ENCODE measurements at regions of chr1 and their contacts with region 1.

Region 1: GRCh38 chr1:47703981-47704596 is 266.2 kb downstream of the FOXD2 start:
- DNase-seq: peak; percentile 39
- H3K4me3 ChIP-seq: no peak overlapping the region
- H3K27ac ChIP-seq: no peak overlapping the region
- H3K4me1 ChIP-seq: no peaks in the 10 kb centered on the region
- H3K27me3 ChIP-seq: peaks cover 20 to 27% of the 10 kb centered on the region in 2 experiments
- CTCF ChIP-seq: peak in 1 of 2 donors; percentile 12
- POLR2A ChIP-seq: no peak

Region 2: DNA sequence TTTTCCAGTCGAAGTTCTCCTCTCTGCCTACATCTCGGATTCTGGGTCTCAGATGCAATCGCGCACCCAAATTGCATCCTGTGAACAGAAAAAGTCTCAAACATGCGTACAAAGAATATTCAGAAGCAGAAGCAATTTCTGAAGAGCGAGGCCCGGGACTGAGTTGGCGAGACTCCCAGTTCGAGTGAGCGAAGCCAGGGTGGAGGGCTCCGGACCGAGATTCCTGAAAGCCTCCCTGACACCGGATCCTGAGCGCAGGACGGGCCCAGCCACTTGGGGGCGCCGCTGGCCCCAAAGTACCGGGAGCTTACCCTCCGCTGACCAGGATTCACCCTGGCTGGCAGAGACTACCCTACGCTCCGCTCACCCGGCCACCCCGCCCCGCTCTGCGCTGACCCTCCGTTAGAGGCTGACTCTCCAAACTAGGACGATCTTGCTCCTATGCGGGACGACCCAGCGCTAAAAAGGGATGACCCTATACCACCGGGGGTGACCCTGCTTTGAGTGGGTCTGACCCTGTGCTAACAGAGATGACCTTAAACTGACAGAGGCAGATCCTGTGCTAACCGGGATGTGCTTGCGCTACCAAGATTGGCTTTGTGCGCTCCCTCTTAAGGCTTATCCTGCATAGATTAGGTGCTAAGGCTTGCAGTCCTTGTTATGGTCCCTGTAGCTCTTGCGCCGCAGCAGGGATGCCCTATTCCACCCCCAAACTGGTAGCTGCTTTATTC is 254.1 kb before region 1 on chr1:
- CTCF ChIA-PET with region 1: interaction called, 35 read pairs
- POLR2A ChIA-PET with region 1: no interaction called
- dilution Hi-C with region 1: loop called (anchors 25 kb)
- intact Hi-C with region 1: no loop called
- DNase-seq: no peak
- H3K4me3 ChIP-seq: no peak overlapping the region
- H3K27ac ChIP-seq: no peak overlapping the region
- H3K4me1 ChIP-seq: no peaks in the 10 kb centered on the region
- H3K27me3 ChIP-seq: peaks cover 62 to 66% of the 10 kb centered on the region in 2 experiments
- CTCF ChIP-seq: peak; percentile 41 to 69
- POLR2A ChIP-seq: no peak

Region 3: GRCh38 chr1:47527658-47528255 is 176.3 kb before region 1 on chr1:
- CTCF ChIA-PET with region 1: interaction called, 79 read pairs
- POLR2A ChIA-PET with region 1: no interaction called
- dilution Hi-C with region 1: no loop called
- intact Hi-C with region 1: loop called (anchors 1 kb)
- DNase-seq: peak; percentile 28
- H3K4me3 ChIP-seq: no peak overlapping the region
- H3K27ac ChIP-seq: no peak overlapping the region
- H3K4me1 ChIP-seq: no peaks in the 10 kb centered on the region
- H3K27me3 ChIP-seq: peaks cover 11 to 20% of the 10 kb centered on the region in 2 experiments
- CTCF ChIP-seq: peak; percentile 38 to 61
- POLR2A ChIP-seq: no peak

Region 4: GRCh38 chr1:48236716-48237470 is 532.8 kb after region 1 on chr1:
- CTCF ChIA-PET with region 1: no interaction called
- POLR2A ChIA-PET with region 1: no interaction called
- dilution Hi-C with region 1: no loop called
- intact Hi-C with region 1: no loop called
- DNase-seq: peak; percentile 26
- H3K4me3 ChIP-seq: no peak overlapping the region
- H3K27ac ChIP-seq: no peak overlapping the region
- H3K4me1 ChIP-seq: no peaks in the 10 kb centered on the region
- H3K27me3 ChIP-seq: no peaks in the 10 kb centered on the region
- CTCF ChIP-seq: peak; percentile 45 to 50
- POLR2A ChIP-seq: no peak

Measured in endothelial cell of umbilical vein (primary cell).